ENCODE measurements at regions of chr4 and their contacts with region 1.

Region 1: GRCh38 chr4:62133101-62133897 is 933.2 kb downstream of the ADGRL3 start:
- DNase-seq: no peak
- H3K4me3 ChIP-seq: no peak overlapping the region
- H3K27ac ChIP-seq: no peak overlapping the region
- H3K4me1 ChIP-seq: no peaks in the 10 kb centered on the region
- H3K27me3 ChIP-seq: no peaks in the 10 kb centered on the region
- CTCF ChIP-seq: no peak
- POLR2A ChIP-seq: no peak

Region 2: GRCh38 chr4:62096881-62097280 is 36.4 kb before region 1 on chr4:
- intact Hi-C with region 1: loop called (anchors 2 kb)
- DNase-seq: no peak
- H3K4me3 ChIP-seq: no peak overlapping the region
- H3K27ac ChIP-seq: no peak overlapping the region
- H3K4me1 ChIP-seq: no peaks in the 10 kb centered on the region
- H3K27me3 ChIP-seq: no peaks in the 10 kb centered on the region
- CTCF ChIP-seq: no peak
- POLR2A ChIP-seq: no peak

Region 3: GRCh38 chr4:62145276-62145675 is 12.0 kb after region 1 on chr4:
- intact Hi-C with region 1: no loop called
- DNase-seq: no peak
- H3K4me3 ChIP-seq: no peak overlapping the region
- H3K27ac ChIP-seq: no peak overlapping the region
- H3K4me1 ChIP-seq: no peaks in the 10 kb centered on the region
- H3K27me3 ChIP-seq: no peaks in the 10 kb centered on the region
- CTCF ChIP-seq: no peak
- POLR2A ChIP-seq: no peak

Region 4: DNA sequence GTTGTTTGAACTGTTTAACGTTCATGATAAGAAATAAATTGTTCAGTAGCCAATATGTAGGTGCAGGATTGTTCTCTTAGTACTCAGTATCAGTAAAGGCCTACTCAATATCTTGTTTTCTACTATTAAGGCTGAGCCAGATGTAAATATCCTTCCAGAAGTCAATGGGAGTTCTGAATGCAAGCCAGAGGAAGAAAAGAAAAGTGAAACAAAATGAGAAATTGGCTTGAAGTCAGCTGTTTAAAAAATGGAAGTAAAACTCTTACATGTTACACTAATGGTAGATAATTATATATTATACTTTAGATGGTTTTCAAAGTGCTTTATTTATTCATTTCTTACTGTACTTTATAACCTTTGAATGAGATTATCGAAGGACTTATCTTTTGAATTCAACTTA is 484.7 kb after region 1 on chr4:
- intact Hi-C with region 1: no loop called
- DNase-seq: no peak
- H3K4me3 ChIP-seq: no peak overlapping the region
- H3K27ac ChIP-seq: no peak overlapping the region
- H3K4me1 ChIP-seq: no peaks in the 10 kb centered on the region
- H3K27me3 ChIP-seq: no peaks in the 10 kb centered on the region
- CTCF ChIP-seq: no peak
- POLR2A ChIP-seq: no peak